ENCODE measurements at regions of chrX and their contacts with region 1.

Region 1: GRCh38 chrX:46903458-46904242 is 8.6 kb upstream of the JADE3 start:
- DNase-seq: peak; percentile 70
- ATAC-seq: peak; percentile 98
- H3K4me3 ChIP-seq: peak overlapping the region; percentile 88
- H3K27ac ChIP-seq: no peak overlapping the region
- H3K4me1 ChIP-seq: no peaks in the 10 kb centered on the region
- H3K27me3 ChIP-seq: peaks cover 8% of the 10 kb centered on the region
- CTCF ChIP-seq: peak; percentile 55
- POLR2A ChIP-seq: no peak
- RAD21 ChIP-seq: peak; percentile 61

Region 2: GRCh38 chrX:47093248-47093647 is 189.6 kb after region 1 on chrX:
- CTCF ChIA-PET with region 1: interaction called, 4 read pairs
- POLR2A ChIA-PET with region 1: no interaction called
- dilution Hi-C with region 1: no loop called
- in situ Hi-C with region 1: no loop called
- intact Hi-C with region 1: loop called (anchors 1 kb)
- DNase-seq: peak; percentile 55
- ATAC-seq: peak; percentile 65
- H3K4me3 ChIP-seq: no peak overlapping the region
- H3K27ac ChIP-seq: no peak overlapping the region
- H3K4me1 ChIP-seq: no peaks in the 10 kb centered on the region
- H3K27me3 ChIP-seq: peaks cover 11% of the 10 kb centered on the region
- CTCF ChIP-seq: peak; percentile 55
- POLR2A ChIP-seq: no peak
- RAD21 ChIP-seq: peak; percentile 61

Measured in IMR-90 (cell line).